ENCODE measurements at regions of chr11 and their contacts with region 1.

Region 1: GRCh38 chr11:18634140-18635032 is at the start of gene SPTY2D1:
- DNase-seq: peak; percentile 94 to 100 (median 97)
- ATAC-seq: peak; percentile 92
- H3K4me3 ChIP-seq: peak within 1 kb of the TSS; percentile 85 to 87
- H3K4me3 Mint-ChIP-seq: peak within 1 kb of the TSS; percentile 88
- H3K27ac ChIP-seq: peak within 1 kb of the TSS; percentile 92 to 100
- H3K27ac Mint-ChIP-seq: peak within 1 kb of the TSS; percentile 97
- H3K4me1 ChIP-seq: peaks cover 15% of the 10 kb centered on the region
- H3K4me1 Mint-ChIP-seq: peaks cover 34% of the 10 kb centered on the region
- H3K27me3 ChIP-seq: no peaks in the 10 kb centered on the region
- H3K27me3 Mint-ChIP-seq: no peaks in the 10 kb centered on the region
- CTCF ChIP-seq: no peak
- total RNA-seq, gene SPTY2D1: 74.9 to 76.9 TPM

Region 2: GRCh38 chr11:16738193-16738946 is 1896.0 kb before region 1 on chr11 and contains the start of gene C11orf58:
- CTCF ChIA-PET with region 1: no interaction called
- POLR2A ChIA-PET with region 1: no interaction called
- intact Hi-C with region 1: loop called in 1 of 2 experiments (anchors 10 kb)
- DNase-seq: peak; percentile 85 to 98 (median 96)
- ATAC-seq: peak; percentile 95
- H3K4me3 ChIP-seq: peak within 1 kb of the TSS; percentile 93 to 95
- H3K4me3 Mint-ChIP-seq: peak within 1 kb of the TSS; percentile 63
- H3K27ac ChIP-seq: peak within 1 kb of the TSS; percentile 99 to 100
- H3K27ac Mint-ChIP-seq: no peak within 1 kb of the TSS
- H3K4me1 ChIP-seq: peaks cover 35% of the 10 kb centered on the region
- H3K4me1 Mint-ChIP-seq: peaks cover 25% of the 10 kb centered on the region
- H3K27me3 ChIP-seq: no peaks in the 10 kb centered on the region
- H3K27me3 Mint-ChIP-seq: no peaks in the 10 kb centered on the region
- CTCF ChIP-seq: no peak
- total RNA-seq, gene C11orf58: 148 to 157 TPM

Region 3: DNA sequence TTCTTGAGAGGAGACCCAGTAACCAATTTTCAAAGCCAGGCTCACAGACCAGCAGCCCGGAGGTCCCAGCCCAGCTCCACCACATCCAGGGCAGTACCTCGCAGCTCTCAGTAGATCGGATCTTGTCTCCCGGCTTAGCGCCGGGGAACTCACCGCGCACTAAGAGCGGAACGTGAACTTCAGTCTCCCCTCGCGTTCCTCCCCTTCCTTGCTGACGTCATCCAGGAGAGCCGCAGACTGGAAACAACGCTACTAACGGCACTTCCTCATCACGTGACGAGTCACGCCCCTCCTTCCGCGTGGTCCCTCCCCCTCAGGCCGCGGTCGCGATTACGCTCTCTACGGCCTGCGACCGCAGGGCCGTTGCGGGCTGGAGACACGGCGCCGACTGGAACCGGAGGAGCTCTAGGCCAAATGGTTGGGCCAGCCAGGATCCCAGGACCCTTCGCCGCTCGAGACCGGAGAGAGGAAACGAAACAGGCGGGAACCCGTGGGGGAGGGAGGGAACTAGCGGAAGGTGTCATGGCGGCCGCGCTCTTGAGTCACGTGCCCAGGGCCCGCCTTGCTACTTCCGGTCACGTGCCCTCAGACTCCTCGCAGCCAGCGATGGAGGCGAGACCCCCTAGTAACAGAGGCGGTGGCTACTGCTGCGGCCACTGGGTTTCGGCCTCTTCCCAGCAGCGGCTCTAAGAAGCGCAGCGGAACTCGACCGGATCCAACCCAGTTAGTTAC is 312.2 kb before region 1 on chr11 and contains the starts of genes GTF2H1 and HPS5:
- CTCF ChIA-PET with region 1: no interaction called
- POLR2A ChIA-PET with region 1: interaction called, 4 read pairs
- intact Hi-C with region 1: loop called (anchors 1 kb)
- DNase-seq: peak; percentile 91 to 100 (median 96)
- ATAC-seq: peak; percentile 87
- H3K4me3 ChIP-seq: peak within 1 kb of the TSS; percentile 89 to 94
- H3K4me3 Mint-ChIP-seq: peak within 1 kb of the TSS; percentile 100
- H3K27ac ChIP-seq: peak within 1 kb of the TSS; percentile 92 to 99
- H3K27ac Mint-ChIP-seq: peak within 1 kb of the TSS; percentile 100
- H3K4me1 ChIP-seq: peaks cover 51% of the 10 kb centered on the region
- H3K4me1 Mint-ChIP-seq: peaks cover 81% of the 10 kb centered on the region
- H3K27me3 ChIP-seq: no peaks in the 10 kb centered on the region
- H3K27me3 Mint-ChIP-seq: no peaks in the 10 kb centered on the region
- CTCF ChIP-seq: no peak
- total RNA-seq, gene GTF2H1: 11.3 to 14.3 TPM
- total RNA-seq, gene HPS5: 9.9 to 12.6 TPM

Region 4: DNA sequence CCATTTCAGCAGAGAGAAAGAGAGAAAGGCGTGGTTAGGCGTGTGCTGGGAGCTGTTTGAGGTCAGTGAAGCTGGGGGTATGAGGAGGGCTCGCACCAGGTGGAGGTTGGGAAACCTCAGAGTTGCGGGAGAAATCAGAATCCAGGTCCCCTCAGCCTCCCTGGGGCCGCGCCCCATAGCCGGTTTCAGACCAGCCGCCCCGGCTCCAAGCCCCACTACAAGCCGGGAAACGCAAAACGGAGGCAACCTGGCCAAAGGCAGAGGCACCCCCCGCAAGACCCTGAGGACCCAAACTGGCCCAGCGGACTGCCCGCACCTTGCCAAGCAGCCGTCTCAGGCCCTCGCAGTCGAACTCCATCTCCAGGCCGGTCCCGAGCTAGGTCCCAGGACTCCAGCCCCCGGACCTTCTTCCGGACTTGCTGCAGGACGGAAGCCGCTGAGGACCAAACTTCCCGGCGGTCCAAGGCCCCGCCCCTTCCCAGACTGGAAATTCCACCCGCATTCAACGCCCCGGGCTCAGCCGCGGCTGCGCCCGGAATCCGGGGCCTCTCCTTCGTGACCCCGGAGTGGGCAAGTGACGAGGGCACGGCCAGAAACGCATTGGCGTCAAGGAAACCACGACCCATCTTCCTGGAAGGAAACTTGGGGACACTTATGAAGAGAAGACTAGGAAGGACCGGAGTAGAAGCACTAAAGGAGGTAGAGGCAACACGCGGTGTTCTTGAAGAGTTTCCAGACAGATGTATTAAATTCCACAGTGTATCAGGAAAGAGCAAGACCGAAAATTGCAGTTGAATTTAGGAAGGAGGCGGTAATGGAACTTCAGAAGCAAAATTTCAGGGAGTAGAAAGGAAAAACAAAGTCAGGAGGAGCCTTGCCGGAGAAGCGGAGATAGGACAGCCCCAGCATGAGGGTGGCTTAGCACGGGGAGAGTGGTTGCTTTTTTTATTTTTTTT is 45.8 kb before region 1 on chr11 and contains the start of gene UEVLD:
- CTCF ChIA-PET with region 1: no interaction called
- POLR2A ChIA-PET with region 1: interaction called, 3 read pairs
- intact Hi-C with region 1: loop called in 1 of 2 experiments (anchors 1 kb)
- DNase-seq: peak; percentile 5 to 85 (median 44)
- ATAC-seq: peak; percentile 55
- H3K4me3 ChIP-seq: peak within 1 kb of the TSS; percentile 75 to 92
- H3K4me3 Mint-ChIP-seq: no peak within 1 kb of the TSS
- H3K27ac ChIP-seq: peak within 1 kb of the TSS; percentile 57 to 92
- H3K27ac Mint-ChIP-seq: no peak within 1 kb of the TSS
- H3K4me1 ChIP-seq: peaks cover 17% of the 10 kb centered on the region
- H3K4me1 Mint-ChIP-seq: peaks cover 10% of the 10 kb centered on the region
- H3K27me3 ChIP-seq: no peaks in the 10 kb centered on the region
- H3K27me3 Mint-ChIP-seq: no peaks in the 10 kb centered on the region
- CTCF ChIP-seq: no peak
- total RNA-seq, gene UEVLD: 1.1 to 2.1 TPM

Region 5: DNA sequence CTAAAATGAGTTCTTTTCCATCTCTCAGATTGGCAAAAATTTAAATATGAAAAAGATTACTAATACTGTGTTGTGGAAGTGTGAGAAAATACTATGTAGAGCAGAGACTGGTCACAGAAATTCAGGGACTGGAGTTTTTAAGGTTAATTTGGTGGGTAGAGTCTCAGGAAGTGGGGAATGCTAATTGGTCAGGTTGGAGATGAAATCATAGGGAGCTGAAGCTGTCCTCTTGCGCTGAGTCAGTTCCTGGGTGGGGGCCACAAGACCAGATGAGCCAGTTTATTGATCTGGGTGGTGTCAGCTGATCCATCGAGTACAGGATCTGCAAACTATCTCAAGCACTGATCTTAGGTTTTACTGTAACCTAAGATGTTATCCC is 34.8 kb after region 1 on chr11:
- CTCF ChIA-PET with region 1: no interaction called
- POLR2A ChIA-PET with region 1: no interaction called
- intact Hi-C with region 1: loop called (anchors 2 kb)
- DNase-seq: peak in 4 of 9 experiments; percentile 2 to 17 (median 16)
- ATAC-seq: no peak
- H3K4me3 ChIP-seq: no peak overlapping the region
- H3K4me3 Mint-ChIP-seq: no peak overlapping the region
- H3K27ac ChIP-seq: no peak overlapping the region
- H3K27ac Mint-ChIP-seq: peak overlapping the region; percentile 7
- H3K4me1 ChIP-seq: peaks cover 37% of the 10 kb centered on the region
- H3K4me1 Mint-ChIP-seq: peaks cover 53% of the 10 kb centered on the region
- H3K27me3 ChIP-seq: no peaks in the 10 kb centered on the region
- H3K27me3 Mint-ChIP-seq: no peaks in the 10 kb centered on the region
- CTCF ChIP-seq: no peak

Region 6: DNA sequence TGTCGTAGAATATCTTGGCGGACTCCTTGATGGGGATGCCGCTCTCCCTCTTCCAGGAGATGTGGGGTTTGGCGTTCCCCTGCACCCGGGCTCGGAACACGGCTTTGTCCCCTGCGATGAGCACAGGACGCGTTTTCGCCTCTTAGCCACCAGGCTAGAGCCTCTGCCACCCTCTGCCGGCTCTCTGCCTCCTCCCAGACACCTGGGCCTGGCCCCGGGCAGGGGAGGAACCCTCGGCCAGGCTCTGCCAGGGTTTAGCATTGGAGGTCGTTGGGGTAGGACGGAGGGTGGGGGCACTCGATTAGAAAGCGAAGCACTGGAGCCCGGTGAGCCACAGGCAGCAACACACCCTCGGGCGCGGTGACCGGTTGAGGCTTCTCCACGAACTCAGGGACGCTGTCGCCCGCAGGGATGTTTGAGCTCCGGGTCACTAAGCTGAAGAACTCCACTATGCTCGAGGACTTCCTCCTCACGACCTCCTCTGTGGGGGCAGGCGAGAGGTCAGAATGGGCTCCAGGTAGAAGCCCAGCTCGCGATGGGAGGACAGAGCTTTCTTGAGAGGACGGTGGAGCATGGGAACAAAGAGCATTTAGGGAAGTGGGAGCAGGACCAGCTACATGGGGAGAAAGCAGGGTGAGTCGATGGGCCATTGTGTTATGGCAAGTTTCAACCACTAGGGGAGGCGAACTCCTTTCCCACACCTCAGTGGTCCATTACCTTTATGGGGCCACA is 87.3 kb after region 1 on chr11:
- CTCF ChIA-PET with region 1: interaction called, 10 read pairs
- POLR2A ChIA-PET with region 1: interaction called, 9 read pairs
- intact Hi-C with region 1: loop called (anchors 2 to 5 kb)
- DNase-seq: peak in 8 of 9 experiments; percentile 24 to 75 (median 50)
- ATAC-seq: peak; percentile 48
- H3K4me3 ChIP-seq: peak overlapping the region; percentile 80 to 92
- H3K4me3 Mint-ChIP-seq: peak overlapping the region; percentile 84
- H3K27ac ChIP-seq: peak overlapping the region; percentile 12 to 48
- H3K27ac Mint-ChIP-seq: no peak overlapping the region
- H3K4me1 ChIP-seq: peaks cover 4% of the 10 kb centered on the region
- H3K4me1 Mint-ChIP-seq: peaks cover 7% of the 10 kb centered on the region
- H3K27me3 ChIP-seq: no peaks in the 10 kb centered on the region
- H3K27me3 Mint-ChIP-seq: no peaks in the 10 kb centered on the region
- CTCF ChIP-seq: peak; percentile 80